Aorta (tissue), 5 donors: ENCODE measurements at regions of chr20 and their contacts with region 1.

Region 1: DNA sequence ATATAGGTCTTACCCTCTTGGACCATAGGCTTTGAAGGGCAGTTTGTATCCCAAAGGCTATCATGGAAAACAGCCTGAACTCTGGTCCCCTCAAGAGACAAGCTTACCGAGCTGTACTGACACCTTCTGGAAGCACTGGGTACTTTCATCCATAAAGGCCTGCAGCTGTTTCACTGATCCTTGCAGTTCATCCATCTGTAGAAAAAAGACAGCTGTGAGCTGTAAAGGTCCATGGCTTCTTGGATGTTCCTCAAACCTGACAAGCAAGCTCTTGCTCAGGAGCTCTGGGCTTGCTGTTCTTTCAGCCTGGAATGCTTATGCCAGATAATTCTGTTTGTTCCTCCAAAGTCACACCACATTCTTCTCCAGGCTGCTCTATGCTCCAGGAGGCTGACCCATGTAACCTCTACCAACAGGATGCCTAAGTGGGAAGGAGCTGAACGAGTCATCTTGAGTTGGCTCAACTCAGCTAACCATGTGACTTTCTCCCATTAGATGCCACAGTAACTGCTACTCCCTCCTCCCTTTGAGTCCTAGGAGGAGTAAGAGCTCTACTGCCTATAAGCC is 8.8 kb upstream of the NDRG3 start:
- DNase-seq: no peak
- ATAC-seq: peak; percentile 85
- H3K4me3 ChIP-seq: no peak overlapping the region
- H3K27ac ChIP-seq: no peak overlapping the region
- H3K4me1 ChIP-seq: no peaks in the 10 kb centered on the region
- H3K27me3 ChIP-seq: no peaks in the 10 kb centered on the region

Region 2: GRCh38 chr20:36519944-36520343 is 234.8 kb before region 1 on chr20:
- intact Hi-C with region 1: no loop called
- DNase-seq: no peak
- ATAC-seq: no peak
- H3K4me3 ChIP-seq: no peak overlapping the region
- H3K27ac ChIP-seq: no peak overlapping the region
- H3K4me1 ChIP-seq: no peaks in the 10 kb centered on the region
- H3K27me3 ChIP-seq: no peaks in the 10 kb centered on the region

Region 3: DNA sequence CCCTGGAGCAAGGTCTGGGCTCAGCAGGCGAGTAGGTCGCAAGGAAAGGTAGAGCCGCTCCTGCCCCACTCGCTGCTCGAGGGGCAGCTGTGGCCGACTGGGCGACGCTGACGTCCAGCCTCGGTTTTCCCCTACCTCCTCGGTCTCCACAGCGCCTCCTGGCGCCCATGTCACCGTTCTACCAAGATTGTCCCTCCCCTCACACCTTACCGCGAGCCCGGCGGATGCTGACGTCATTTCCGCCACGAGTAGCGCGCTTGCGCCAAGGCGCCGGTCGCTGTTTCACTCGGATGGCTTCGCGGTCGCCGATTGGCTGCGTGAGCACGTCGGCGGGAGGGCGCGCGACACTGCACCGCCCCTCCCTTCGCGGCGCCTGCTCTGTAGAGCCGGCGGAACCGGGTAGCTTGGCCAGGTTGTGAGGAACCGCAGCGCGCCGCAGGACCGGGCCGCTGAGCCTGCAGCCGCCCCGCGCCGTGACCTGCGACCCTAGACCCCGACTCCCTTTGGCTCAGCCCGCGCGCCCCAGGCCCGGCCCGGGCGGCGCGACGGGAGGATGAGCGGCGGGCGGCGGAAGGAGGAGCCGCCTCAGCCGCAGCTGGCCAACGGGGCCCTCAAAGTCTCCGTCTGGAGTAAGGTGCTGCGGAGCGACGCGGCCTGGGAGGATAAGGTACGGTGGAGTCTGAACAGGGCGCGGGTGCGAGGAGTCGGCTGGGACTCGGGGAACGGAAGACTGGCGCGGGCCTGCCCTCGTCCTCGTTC is 149.2 kb before region 1 on chr20 and contains the start of gene RAB5IF:
- intact Hi-C with region 1: loop called in 1 of 2 experiments (anchors 5 kb)
- DNase-seq: peak; percentile 100
- ATAC-seq: peak; percentile 99
- H3K4me3 ChIP-seq: peak within 1 kb of the TSS; percentile 57 to 95
- H3K27ac ChIP-seq: peak within 1 kb of the TSS in 1 of 2 donors; percentile 66
- H3K4me1 ChIP-seq: peaks cover 0 to 6% of the 10 kb centered on the region in 2 donors
- H3K27me3 ChIP-seq: no peaks in the 10 kb centered on the region
- total RNA-seq, gene RAB5IF: 39.8 to 48.1 TPM

Region 4: DNA sequence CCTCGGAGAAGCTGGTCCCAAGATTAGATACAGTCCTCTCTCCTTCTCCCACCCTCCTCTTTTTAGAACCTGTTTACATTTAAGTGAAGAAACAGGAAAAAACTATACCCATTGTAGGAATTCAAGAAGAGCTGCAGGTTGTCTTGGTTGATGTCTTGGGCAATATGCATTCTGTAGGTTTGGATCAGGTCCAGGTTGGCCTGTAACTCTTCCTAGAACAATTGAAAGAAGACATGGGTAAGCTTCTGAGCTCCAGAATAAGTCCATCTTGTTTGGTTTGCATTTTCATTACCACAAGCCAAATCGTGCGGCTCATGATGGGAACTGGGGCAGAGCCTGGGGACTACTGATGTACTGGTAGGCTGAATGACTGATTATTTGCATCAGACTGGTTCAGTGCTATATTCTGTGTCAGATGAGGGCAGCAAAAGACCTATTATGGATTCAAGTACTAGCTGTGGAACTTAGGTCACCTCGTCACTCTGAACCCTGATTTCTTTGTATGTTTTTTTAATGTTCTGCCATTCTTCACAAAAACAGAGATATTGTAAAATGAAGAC is 88.5 kb before region 1 on chr20:
- intact Hi-C with region 1: loop called (anchors 2 to 5 kb)
- DNase-seq: no peak
- ATAC-seq: no peak
- H3K4me3 ChIP-seq: no peak overlapping the region
- H3K27ac ChIP-seq: no peak overlapping the region
- H3K4me1 ChIP-seq: no peaks in the 10 kb centered on the region
- H3K27me3 ChIP-seq: no peaks in the 10 kb centered on the region